T-cell (primary cell): ENCODE measurements at regions of chr4 and their contacts with region 1.

Region 1: GRCh38 chr4:20313237-20314030 is 61.7 kb downstream of the SLIT2 start:
- DNase-seq: no peak
- ATAC-seq: no peak
- H3K4me3 ChIP-seq: no peak overlapping the region
- H3K4me3 Mint-ChIP-seq: no peak overlapping the region
- H3K27ac ChIP-seq: no peak overlapping the region
- H3K27ac Mint-ChIP-seq: no peak overlapping the region
- H3K4me1 ChIP-seq: no peaks in the 10 kb centered on the region
- H3K4me1 Mint-ChIP-seq: no peaks in the 10 kb centered on the region
- H3K27me3 ChIP-seq: peaks cover 0 to 2% of the 10 kb centered on the region in 2 experiments
- H3K27me3 Mint-ChIP-seq: no peaks in the 10 kb centered on the region

Region 2: DNA sequence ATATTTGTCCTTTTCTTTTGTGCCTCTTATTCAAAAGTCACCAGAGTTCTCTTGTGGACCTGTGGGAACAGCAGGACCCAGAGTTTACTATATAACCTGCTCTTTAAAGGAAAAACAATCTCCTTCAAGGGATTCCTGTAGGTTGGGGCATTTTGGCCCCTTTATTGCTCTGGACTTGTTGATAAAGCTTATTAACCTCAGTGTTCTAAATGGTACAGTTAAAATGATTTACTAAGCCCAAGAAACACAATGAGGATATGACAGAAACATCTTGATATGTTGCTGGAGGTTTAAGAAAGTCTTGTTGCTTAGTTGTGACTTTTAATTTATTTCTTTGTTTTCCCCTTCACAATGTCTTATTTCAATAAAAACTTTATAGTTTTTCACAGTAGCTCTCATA is 15.0 kb before region 1 on chr4:
- CTCF ChIA-PET with region 1: no interaction called
- POLR2A ChIA-PET with region 1: no interaction called
- DNase-seq: no peak
- ATAC-seq: no peak
- H3K4me3 ChIP-seq: no peak overlapping the region
- H3K4me3 Mint-ChIP-seq: no peak overlapping the region
- H3K27ac ChIP-seq: no peak overlapping the region
- H3K27ac Mint-ChIP-seq: no peak overlapping the region
- H3K4me1 ChIP-seq: no peaks in the 10 kb centered on the region
- H3K4me1 Mint-ChIP-seq: no peaks in the 10 kb centered on the region
- H3K27me3 ChIP-seq: no peaks in the 10 kb centered on the region
- H3K27me3 Mint-ChIP-seq: no peaks in the 10 kb centered on the region

Region 3: DNA sequence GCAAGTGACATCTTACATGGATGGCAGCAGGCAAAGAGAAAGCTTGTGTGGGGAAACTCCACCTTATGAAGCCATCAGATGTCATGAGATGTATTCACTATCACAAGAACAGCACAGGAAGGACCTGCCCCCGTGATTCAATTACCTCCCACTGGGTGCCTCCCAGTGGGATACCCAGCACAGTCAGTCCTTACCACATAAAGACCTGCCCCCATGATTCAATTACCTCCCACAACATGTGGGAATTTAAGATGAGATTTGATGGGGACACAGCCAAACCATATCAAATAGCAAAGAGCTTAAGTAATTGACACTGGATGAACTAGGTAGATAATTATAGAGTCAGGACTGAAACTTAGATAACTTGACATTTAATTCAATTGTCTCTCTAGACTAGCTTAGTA is 23.8 kb after region 1 on chr4:
- CTCF ChIA-PET with region 1: no interaction called
- POLR2A ChIA-PET with region 1: interaction called in 1 of 2 experiments, 12 read pairs
- DNase-seq: no peak
- ATAC-seq: no peak
- H3K4me3 ChIP-seq: no peak overlapping the region
- H3K4me3 Mint-ChIP-seq: no peak overlapping the region
- H3K27ac ChIP-seq: no peak overlapping the region
- H3K27ac Mint-ChIP-seq: no peak overlapping the region
- H3K4me1 ChIP-seq: no peaks in the 10 kb centered on the region
- H3K4me1 Mint-ChIP-seq: no peaks in the 10 kb centered on the region
- H3K27me3 ChIP-seq: no peaks in the 10 kb centered on the region
- H3K27me3 Mint-ChIP-seq: peaks cover 0 to under 1% of the 10 kb centered on the region in 2 donors